Activated T-helper 2 cell treated with anti-CD3 and anti-CD28 coated beads, Interferon-gamma antibody, Interleukin-2, Interleukin-4, amounts not matched to agents 10 μg/mL and 5 μg/mL and 100 μg/mL, durations not matched to agents 14 hours and 24 hours and 36 hours (primary cell): ENCODE measurements at regions of chr2 and their contacts with region 1.

Region 1: DNA sequence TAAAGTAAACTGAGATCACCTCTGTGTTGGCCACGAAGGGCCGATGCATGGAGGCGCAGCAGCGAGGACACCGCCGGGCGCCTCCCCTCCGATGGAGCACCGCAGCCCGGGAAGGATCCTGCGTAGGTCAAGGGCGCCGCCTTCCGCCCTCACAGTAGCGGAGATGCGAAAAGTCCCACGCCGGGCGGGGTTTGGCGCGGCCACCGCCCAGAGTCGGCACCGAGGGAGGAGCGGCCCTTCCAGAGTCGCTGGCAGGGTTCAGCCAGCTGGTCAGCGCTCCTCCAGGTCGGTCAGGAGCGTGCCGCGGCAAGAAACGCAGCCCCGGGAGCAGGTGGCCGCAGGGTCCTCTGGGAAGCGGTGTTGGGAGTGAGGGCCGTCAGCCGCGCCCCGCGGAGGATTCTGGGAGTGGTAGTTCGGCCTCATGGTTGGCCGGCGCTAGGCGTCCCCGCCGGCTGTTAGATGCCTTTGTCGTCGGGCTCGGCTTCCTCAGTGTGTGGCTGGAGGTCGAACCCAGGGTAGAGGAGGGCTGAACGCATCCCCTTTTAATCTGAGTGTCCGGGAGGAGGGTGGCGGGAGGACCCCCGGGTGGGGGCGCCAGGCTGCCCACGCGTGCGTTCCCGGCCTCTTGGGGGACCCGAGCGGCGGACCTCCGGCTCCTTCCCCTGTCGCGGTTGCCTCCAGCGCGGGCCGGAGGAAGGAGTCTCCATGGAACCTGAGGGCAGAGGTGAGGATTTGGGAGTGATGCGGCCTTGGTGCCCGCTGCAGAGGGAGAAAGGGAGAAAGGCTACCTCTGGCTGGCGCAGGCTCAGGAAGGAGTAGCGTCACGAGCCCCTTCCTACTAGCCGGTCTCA is at the start of gene ZNF892:
- DNase-seq: peak; percentile 75
- H3K4me3 Mint-ChIP-seq: peak within 1 kb of the TSS; percentile 87
- H3K27ac Mint-ChIP-seq: peak within 1 kb of the TSS; percentile 60
- H3K4me1 Mint-ChIP-seq: peaks cover 17% of the 10 kb centered on the region
- H3K27me3 Mint-ChIP-seq: no peaks in the 10 kb centered on the region
- total RNA-seq, gene ZNF892: 4.7 and 4.8 TPM in 2 replicates

Region 2: DNA sequence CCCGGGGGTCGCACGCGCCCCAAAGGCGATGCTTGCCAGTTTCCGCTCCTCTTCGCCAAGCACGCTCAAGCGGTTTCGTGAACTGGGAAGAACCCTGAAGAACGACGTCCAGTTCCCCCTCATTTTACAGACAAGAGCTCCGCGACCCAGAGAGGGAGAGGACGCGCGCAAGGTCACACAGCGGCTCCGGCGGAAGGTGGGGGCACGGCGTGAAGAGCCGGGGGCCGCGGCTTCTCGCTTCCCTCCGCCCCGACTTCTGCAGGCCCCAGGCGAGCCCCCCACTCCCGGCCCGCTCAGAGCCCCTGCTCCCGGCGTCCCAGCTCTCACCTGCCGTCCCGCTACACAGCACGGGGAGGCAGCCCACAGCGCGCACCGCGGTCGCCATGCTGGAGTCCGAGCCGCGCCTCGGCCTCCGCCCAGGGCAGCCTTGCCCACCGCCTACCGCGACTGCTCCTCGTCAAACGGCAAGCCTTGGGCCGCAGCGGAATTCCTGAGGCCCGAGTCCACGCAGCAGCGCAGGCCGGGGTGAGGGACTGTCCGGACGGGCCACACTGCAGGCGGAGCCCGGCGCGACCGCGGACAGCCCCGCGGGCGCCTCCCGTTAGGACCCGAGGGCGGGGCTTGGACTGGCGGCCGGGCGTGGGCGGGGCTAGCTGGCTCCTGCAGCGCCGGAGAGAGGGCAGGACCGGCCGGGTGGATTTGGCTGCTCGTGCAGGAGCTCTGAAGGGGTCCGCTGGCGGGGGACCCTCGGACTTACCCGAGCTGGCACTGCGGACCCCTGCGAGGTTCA is 85.7 kb before region 1 on chr2 and contains the start of gene MRPS5:
- intact Hi-C with region 1: loop called (anchors 1 kb)
- DNase-seq: peak; percentile 79
- H3K4me3 Mint-ChIP-seq: peak within 1 kb of the TSS; percentile 96
- H3K27ac Mint-ChIP-seq: peak within 1 kb of the TSS; percentile 92
- H3K4me1 Mint-ChIP-seq: peaks cover 38% of the 10 kb centered on the region
- H3K27me3 Mint-ChIP-seq: no peaks in the 10 kb centered on the region
- total RNA-seq, gene MRPS5: 90.7 and 92.4 TPM in 2 replicates

Region 3: DNA sequence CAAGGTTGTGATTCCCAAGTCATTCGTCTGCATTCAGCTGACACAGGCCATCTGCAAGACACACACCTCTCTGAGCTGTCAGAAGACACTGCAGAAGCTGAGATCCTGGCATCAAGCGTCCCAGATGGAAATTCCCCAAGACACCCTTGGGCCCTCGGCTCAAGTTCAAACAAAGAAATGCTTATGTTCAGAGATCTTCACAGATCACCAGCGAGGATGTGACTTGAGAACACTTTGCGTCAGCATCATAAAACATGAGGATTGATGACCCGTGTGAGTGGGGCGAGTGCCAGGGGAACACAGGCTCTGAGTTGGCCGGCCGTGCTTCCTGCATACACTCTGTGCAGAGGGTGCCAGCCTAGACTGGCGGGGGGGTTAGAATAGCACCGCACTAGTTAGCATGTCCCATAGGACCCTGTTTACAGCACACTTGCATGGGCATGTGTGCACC is 126.6 kb after region 1 on chr2:
- intact Hi-C with region 1: no loop called
- DNase-seq: no peak
- H3K4me3 Mint-ChIP-seq: no peak overlapping the region
- H3K27ac Mint-ChIP-seq: no peak overlapping the region
- H3K4me1 Mint-ChIP-seq: no peaks in the 10 kb centered on the region
- H3K27me3 Mint-ChIP-seq: peaks cover 5% of the 10 kb centered on the region